ENCODE measurements at regions of chr2 and their contacts with region 1.

Region 1: DNA sequence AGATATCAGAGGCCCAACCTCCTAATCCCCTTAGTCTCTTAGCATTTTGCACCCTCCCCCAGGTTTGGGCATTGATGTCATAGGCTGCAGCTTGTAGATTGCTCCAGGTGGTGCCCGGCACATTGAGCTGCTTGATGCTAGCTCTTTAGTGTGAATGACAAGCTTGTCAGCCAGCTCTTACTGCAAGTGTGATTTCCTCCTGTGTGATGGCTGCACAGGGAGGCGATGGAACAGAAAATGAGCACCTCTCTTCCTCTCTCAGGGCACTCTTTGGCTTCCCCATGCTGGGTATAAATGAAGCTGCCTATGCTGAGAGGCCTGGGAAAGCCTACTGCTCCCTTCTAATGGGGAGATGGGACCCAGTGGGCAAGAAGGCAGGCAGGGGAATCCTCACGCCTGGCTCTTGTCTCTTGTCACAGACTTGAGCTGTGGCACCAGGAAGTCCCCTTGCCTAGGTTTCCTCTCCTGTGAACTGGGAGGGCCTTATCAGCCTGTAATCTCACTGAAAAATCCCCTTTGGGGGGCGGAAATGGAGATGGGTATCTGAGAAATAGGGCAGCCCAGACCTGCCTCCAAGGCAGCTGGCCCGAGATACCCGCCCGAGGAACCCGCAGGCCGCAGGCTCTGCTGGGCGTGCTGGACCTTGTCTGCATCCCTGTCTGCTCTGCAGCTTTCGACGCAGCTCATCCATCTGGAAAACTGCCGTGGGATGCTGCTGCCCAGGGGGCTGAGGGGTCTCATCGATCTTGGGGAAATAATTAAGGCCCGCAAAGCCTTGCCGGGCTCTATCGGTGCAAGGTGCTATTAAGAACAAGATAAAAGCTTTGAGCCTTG is 163.5 kb upstream of the CXCR4 start:
- DNase-seq: peak; percentile 25
- H3K4me3 Mint-ChIP-seq: no peak overlapping the region
- H3K27ac Mint-ChIP-seq: peak overlapping the region; percentile 77
- H3K4me1 Mint-ChIP-seq: peaks cover 45% of the 10 kb centered on the region
- H3K27me3 Mint-ChIP-seq: no peaks in the 10 kb centered on the region

Region 2: DNA sequence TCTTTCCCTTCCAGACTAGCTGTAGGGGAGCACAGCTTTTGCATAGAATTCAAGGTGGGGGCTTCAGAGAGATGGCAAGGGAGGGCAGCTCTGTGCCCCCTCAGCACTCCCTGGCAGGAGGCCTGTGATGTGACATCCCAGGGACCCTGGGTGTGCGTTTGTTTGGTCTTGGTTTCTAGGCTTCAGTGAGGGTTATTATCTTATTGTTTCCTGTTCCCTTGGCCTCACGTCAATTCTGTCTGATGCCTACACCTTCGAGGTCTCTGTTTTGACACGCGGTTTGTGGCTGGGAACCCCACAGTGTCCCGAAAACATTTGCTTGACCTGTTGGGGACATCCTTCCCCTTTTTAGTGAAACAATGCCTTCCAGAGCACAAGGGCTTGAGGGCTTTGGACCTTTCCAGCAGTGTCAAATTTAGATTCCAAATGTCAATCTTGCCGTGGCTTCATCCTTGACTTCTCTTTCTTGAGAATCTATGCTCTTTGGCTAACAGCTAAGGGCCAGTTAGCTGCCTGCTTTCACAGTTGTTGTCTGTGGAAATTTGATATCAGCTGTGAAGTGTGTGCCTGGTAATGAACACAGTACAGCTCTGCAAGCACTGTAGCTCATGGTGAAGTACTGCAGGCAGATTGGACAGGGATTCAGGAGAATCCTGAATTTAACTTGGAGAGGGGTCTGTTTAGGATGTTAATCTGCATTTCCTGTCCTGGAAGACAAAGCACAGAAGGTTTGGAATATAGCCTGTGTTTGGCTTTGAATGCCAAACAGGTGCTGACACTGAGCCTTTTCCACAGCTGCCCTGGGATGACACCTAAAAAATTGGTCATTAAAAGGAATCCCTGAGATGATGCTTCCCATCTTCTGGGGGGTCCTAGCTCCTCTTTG is 55.3 kb before region 1 on chr2:
- intact Hi-C with region 1: no loop called
- DNase-seq: no peak
- H3K4me3 Mint-ChIP-seq: no peak overlapping the region
- H3K27ac Mint-ChIP-seq: peak overlapping the region; percentile 26
- H3K4me1 Mint-ChIP-seq: peaks cover 19% of the 10 kb centered on the region
- H3K27me3 Mint-ChIP-seq: peaks cover 12% of the 10 kb centered on the region

Region 3: GRCh38 chr2:136253288-136254004 is 28.1 kb before region 1 on chr2:
- intact Hi-C with region 1: loop called (anchors 2 kb)
- DNase-seq: no peak
- H3K4me3 Mint-ChIP-seq: no peak overlapping the region
- H3K27ac Mint-ChIP-seq: no peak overlapping the region
- H3K4me1 Mint-ChIP-seq: peaks cover 27% of the 10 kb centered on the region
- H3K27me3 Mint-ChIP-seq: no peaks in the 10 kb centered on the region

Measured in activated T-helper 2 cell treated with anti-CD3 and anti-CD28 coated beads, Interferon-gamma antibody, Interleukin-2, Interleukin-4, amounts not matched to agents 10 μg/mL and 5 μg/mL and 100 μg/mL, durations not matched to agents 14 hours and 24 hours and 36 hours (primary cell).